Heart right ventricle (tissue), 16 donors: ENCODE measurements at regions of chr17 and their contacts with region 1.

Region 1: DNA sequence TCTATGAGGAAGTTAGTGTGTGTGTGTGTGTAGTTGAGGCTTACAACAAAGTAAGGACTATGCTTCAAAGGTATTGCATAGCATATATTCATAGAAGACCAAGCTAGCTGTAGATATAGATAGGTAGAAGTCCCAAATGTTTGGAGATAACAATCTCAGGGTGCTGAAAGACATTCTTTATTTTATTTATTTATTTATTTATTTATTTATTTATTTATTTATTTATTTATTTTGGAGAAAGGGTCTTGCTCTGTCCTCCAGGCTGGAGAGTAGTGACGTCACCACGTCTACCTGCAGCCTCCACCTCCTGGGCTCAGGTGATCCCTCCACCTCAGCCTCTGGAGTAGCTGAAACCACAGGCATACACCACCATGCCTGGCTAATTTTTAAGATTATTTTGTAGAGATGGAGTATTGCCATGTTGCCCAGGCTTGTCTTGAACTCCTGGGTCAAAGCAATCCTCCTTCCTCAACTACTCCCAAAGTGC is 284.6 kb upstream of the KIF2B start:
- DNase-seq: no peak
- ATAC-seq: no peak
- H3K4me3 ChIP-seq: no peak overlapping the region
- H3K27ac ChIP-seq: no peak overlapping the region
- H3K4me1 ChIP-seq: no peaks in the 10 kb centered on the region
- H3K27me3 ChIP-seq: no peaks in the 10 kb centered on the region
- CTCF ChIP-seq: no peak

Region 2: GRCh38 chr17:52276381-52277008 is 1261.7 kb before region 1 on chr17:
- intact Hi-C with region 1: loop called in 1 of 10 experiments (anchors 10 kb)
- DNase-seq: no peak
- ATAC-seq: no peak
- H3K4me3 ChIP-seq: no peak overlapping the region
- H3K27ac ChIP-seq: no peak overlapping the region
- H3K4me1 ChIP-seq: no peaks in the 10 kb centered on the region
- H3K27me3 ChIP-seq: no peaks in the 10 kb centered on the region
- CTCF ChIP-seq: no peak

Region 3: GRCh38 chr17:53640808-53641207 is 102.6 kb after region 1 on chr17:
- intact Hi-C with region 1: no loop called
- DNase-seq: no peak
- ATAC-seq: no peak
- H3K4me3 ChIP-seq: no peak overlapping the region
- H3K27ac ChIP-seq: no peak overlapping the region
- H3K4me1 ChIP-seq: no peaks in the 10 kb centered on the region
- H3K27me3 ChIP-seq: no peaks in the 10 kb centered on the region
- CTCF ChIP-seq: no peak

Region 4: GRCh38 chr17:54864636-54865356 is 1326.6 kb after region 1 on chr17:
- intact Hi-C with region 1: loop called in 1 of 10 experiments (anchors 10 kb)
- DNase-seq: no peak
- ATAC-seq: no peak
- H3K4me3 ChIP-seq: no peak overlapping the region
- H3K27ac ChIP-seq: no peak overlapping the region
- H3K4me1 ChIP-seq: no peaks in the 10 kb centered on the region
- H3K27me3 ChIP-seq: peaks cover 0 to 3% (median 0%) of the 10 kb centered on the region in 7 donors
- CTCF ChIP-seq: no peak